Upper lobe of right lung (tissue), 1 donor: ENCODE measurements at regions of chr3 and their contacts with region 1.

Region 1: DNA sequence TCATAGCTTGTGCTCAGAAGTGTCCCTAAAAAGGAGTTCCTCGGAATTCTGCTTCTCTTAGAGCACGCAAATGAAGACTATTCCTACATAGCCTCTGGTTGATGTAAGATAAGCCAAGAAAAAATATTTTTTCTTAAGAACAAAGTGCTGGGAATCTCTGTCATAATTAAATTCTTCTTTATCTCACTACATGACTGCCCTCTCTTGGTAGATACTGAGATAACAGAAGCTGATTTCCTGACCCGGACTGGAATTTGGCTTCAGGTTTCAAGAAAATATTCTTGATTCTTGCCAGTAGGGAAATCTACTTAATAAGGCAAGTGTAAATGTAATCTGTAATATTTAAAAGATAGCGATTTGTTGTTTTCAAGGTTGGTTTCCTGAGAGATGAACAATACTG is 31.3 kb upstream of the SETMAR start:
- DNase-seq: no peak
- ATAC-seq: peak; percentile 37
- H3K4me3 ChIP-seq: no peak overlapping the region
- H3K27ac ChIP-seq: no peak overlapping the region
- H3K4me1 ChIP-seq: peaks cover 14% of the 10 kb centered on the region
- H3K27me3 ChIP-seq: no peaks in the 10 kb centered on the region
- CTCF ChIP-seq: peak; percentile 52

Region 2: DNA sequence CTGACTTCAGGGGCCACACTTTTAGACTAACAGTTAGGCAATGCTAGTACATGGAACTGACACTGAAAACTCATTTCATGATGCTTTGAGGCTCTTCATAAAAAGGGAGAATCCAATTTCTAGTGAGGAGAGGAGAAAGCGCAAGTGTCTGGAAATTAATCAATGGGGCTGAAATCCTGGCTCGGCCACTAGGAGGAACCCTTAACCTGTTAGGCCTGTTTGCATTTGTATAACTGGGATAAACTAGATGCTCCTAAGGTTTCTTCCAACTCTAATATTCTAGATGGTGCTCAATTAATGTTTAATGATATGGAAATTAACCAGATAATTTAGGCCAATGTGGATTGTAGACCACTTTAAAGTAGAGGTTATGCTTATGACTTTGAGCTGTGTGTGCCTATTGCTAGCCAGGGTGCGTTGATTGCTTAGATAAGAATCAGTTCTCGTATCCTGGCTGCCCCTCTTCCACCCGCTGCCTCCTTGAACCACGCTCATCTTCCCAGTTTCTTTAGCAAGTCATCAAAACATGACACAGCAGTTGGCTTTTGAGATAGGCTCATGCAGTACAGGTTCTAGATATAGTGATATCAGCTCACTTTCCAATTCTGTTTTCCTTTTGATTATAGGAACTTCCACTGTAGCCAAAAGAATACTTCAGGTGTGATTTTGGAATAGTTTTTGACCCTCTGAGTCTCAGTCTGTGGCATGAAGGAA is 1075.5 kb before region 1 on chr3:
- intact Hi-C with region 1: loop called (anchors 10 kb)
- DNase-seq: no peak
- ATAC-seq: no peak
- H3K4me3 ChIP-seq: no peak overlapping the region
- H3K27ac ChIP-seq: no peak overlapping the region
- H3K4me1 ChIP-seq: no peaks in the 10 kb centered on the region
- H3K27me3 ChIP-seq: peaks cover 4% of the 10 kb centered on the region
- CTCF ChIP-seq: peak; percentile 38

Region 3: GRCh38 chr3:3705090-3705775 is 566.6 kb before region 1 on chr3:
- intact Hi-C with region 1: no loop called
- DNase-seq: no peak
- ATAC-seq: no peak
- H3K4me3 ChIP-seq: no peak overlapping the region
- H3K27ac ChIP-seq: no peak overlapping the region
- H3K4me1 ChIP-seq: no peaks in the 10 kb centered on the region
- H3K27me3 ChIP-seq: no peaks in the 10 kb centered on the region
- CTCF ChIP-seq: no peak